ENCODE measurements at regions of chr17 and their contacts with region 1.

Region 1: GRCh38 chr17:74484066-74484465 is 17.6 kb downstream of the CD300A start:
- DNase-seq: no peak
- H3K4me3 ChIP-seq: no peak overlapping the region
- H3K27ac ChIP-seq: no peak overlapping the region
- H3K4me1 ChIP-seq: no peaks in the 10 kb centered on the region
- H3K27me3 ChIP-seq: no peaks in the 10 kb centered on the region
- CTCF ChIP-seq: no peak

Region 2: GRCh38 chr17:74528491-74529199 is 44.6 kb after region 1 on chr17:
- CTCF ChIA-PET with region 1: no interaction called
- dilution Hi-C with region 1: loop called (anchors 5 kb)
- in situ Hi-C with region 1: no loop called
- intact Hi-C with region 1: no loop called
- DNase-seq: no peak
- H3K4me3 ChIP-seq: no peak overlapping the region
- H3K27ac ChIP-seq: no peak overlapping the region
- H3K4me1 ChIP-seq: no peaks in the 10 kb centered on the region
- H3K27me3 ChIP-seq: no peaks in the 10 kb centered on the region
- CTCF ChIP-seq: no peak

Region 3: DNA sequence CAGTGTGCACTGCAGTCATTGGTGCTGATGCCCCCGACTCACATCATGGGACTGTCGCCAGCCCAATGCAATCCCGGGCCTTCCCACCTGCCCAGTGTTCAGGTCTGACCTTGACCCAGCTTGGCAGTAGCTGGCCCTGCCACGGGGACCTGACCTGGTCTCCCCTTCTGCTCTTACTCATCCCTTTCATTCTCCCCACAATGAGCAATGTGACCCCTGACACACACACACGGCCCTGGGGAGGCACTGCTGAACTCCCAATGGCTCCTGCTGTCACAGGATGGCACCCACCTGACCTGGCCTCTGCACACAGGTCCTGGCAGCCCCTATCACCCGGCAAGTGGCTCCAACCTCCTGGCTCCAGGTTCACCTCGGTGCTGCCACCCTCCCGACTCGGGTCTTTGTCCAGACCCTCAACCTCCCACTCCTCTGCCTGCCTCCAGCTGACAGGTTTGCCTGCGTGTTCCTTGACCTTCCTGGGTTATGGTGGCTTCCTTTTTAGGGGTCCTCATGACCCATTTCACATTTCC is 55.3 kb after region 1 on chr17:
- CTCF ChIA-PET with region 1: no interaction called
- dilution Hi-C with region 1: no loop called
- in situ Hi-C with region 1: no loop called
- intact Hi-C with region 1: no loop called
- DNase-seq: no peak
- H3K4me3 ChIP-seq: no peak overlapping the region
- H3K27ac ChIP-seq: no peak overlapping the region
- H3K4me1 ChIP-seq: no peaks in the 10 kb centered on the region
- H3K27me3 ChIP-seq: no peaks in the 10 kb centered on the region
- CTCF ChIP-seq: no peak

Measured in mammary epithelial cell (primary cell).